ENCODE measurements at regions of chr1 and their contacts with region 1.

Region 1: DNA sequence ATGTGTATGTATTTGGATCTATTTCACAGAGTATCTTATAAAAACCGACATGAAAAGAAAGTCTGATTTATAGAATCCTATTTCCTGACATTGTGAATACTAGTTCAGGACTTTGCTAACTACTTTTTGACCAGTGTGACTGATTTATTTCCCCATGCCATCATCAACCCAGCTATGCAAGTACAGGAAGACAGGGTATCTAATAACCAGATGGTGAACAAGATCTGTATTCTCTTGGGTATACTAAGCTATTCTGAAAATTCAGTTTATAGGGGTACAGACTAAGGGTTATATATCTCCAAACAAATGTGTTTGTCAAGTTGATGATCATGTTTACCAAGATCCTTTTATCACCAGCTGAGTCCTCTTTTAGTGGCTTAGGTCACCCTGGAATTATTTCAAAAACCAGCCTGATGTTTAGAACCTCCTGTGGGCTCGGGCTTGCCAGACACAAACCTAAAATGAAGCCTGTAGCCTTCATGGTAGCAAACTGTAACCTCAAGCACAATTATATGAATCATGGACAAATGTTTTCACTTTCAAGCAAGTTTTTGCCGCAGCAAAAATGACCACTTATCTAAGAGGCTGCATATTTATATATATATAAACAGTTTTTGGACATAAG is 185.1 kb downstream of the FGGY start:
- DNase-seq: no peak
- ATAC-seq: no peak
- H3K4me3 ChIP-seq: no peak overlapping the region
- H3K27ac ChIP-seq: no peak overlapping the region
- H3K4me1 ChIP-seq: peaks cover 0 to 38% (median 10%) of the 10 kb centered on the region in 12 donors
- H3K27me3 ChIP-seq: no peaks in the 10 kb centered on the region
- CTCF ChIP-seq: no peak
- POLR2A ChIP-seq: no peak

Region 2: DNA sequence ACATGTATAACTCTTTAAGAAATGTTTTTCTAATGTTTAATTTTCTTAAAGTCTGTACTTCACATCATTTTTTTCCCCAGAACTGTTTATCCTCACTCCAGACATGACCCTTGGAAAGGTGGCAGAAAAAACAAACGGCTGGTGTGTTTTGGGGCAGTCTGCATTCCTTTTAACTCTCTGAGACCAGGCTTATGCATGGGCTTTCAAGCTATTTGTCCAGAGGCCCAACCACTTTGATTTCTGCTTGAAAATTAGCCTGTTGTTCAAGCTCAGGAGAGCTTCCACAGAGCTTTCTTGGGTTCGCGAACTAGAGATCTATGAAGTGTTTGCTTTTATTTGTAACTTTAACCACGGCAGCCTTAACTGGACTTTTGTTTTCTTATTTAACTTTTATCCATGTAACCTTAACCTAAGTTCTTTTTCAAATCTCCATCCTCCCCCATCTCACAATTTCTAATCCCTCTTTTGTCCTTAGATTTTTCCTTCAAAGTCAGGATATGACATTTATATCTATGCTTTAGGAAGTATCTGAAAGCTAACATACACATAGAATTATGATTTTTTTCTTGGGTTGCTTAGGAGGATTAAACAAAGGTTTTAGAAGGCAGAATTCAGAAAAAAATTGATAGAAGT is 73.3 kb before region 1 on chr1:
- intact Hi-C with region 1: no loop called
- DNase-seq: no peak
- ATAC-seq: no peak
- H3K4me3 ChIP-seq: no peak overlapping the region
- H3K27ac ChIP-seq: peak overlapping the region in 2 of 12 donors; percentile 1 to 20
- H3K4me1 ChIP-seq: peaks cover 0 to 15% (median 0%) of the 10 kb centered on the region in 12 donors
- H3K27me3 ChIP-seq: no peaks in the 10 kb centered on the region
- CTCF ChIP-seq: no peak
- POLR2A ChIP-seq: no peak

Region 3: DNA sequence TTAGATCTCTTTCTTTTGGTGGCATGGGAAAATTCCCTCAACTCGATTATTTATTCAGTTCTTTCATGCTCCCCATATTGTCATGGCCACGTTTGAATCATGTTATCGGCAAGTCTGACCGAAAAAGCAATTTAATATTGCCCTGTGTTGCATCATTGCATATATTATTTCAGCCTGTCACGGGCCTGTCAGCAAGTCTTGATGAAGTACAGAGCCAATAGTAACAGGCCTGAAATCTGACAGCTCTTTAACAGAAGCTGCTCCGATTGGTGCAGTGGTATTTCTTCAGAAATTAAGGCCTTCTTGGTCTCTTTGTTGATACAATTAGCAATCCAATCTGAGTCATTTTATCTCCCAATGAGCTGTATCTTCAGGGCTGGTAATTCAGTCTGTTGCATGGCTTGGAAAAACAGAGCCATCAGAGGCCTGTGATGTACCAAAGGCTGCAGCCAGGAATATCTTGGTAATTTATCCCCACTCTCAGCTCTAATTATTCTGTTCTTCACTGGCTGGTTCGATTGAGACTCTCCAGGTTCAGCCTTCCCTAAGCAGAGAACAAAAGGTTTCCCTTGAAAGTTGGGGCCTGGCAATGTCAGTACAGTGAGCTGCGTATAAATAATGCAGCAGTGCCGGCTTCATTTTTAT is 35.6 kb before region 1 on chr1:
- intact Hi-C with region 1: loop called in 1 of 10 experiments (anchors 2 kb)
- DNase-seq: no peak
- ATAC-seq: peak; percentile 69 to 82 (median 77)
- H3K4me3 ChIP-seq: no peak overlapping the region
- H3K27ac ChIP-seq: peak overlapping the region in 11 of 12 donors; percentile 32 to 74 (median 60)
- H3K4me1 ChIP-seq: peaks cover 0 to 44% (median 20%) of the 10 kb centered on the region in 12 donors
- H3K27me3 ChIP-seq: no peaks in the 10 kb centered on the region
- CTCF ChIP-seq: no peak
- POLR2A ChIP-seq: no peak

Region 4: GRCh38 chr1:59580257-59580656 is 98.3 kb after region 1 on chr1:
- intact Hi-C with region 1: no loop called
- DNase-seq: no peak
- ATAC-seq: no peak
- H3K4me3 ChIP-seq: no peak overlapping the region
- H3K27ac ChIP-seq: peak overlapping the region in 1 of 12 donors; percentile 64
- H3K4me1 ChIP-seq: peaks cover 0 to 6% (median 0%) of the 10 kb centered on the region in 12 donors
- H3K27me3 ChIP-seq: no peaks in the 10 kb centered on the region
- CTCF ChIP-seq: no peak
- POLR2A ChIP-seq: no peak